ENCODE measurements at regions of chr20 and their contacts with region 1.

Region 1: GRCh38 chr20:38073307-38074071 is 39.9 kb downstream of the RPRD1B start:
- DNase-seq: peak; percentile 75
- H3K4me3 ChIP-seq: no peak overlapping the region
- H3K27ac ChIP-seq: no peak overlapping the region
- H3K4me1 ChIP-seq: no peaks in the 10 kb centered on the region
- H3K27me3 ChIP-seq: no peaks in the 10 kb centered on the region
- CTCF ChIP-seq: peak; percentile 80

Region 2: GRCh38 chr20:37896932-37897548 is 176.4 kb before region 1 on chr20:
- CTCF ChIA-PET with region 1: no interaction called
- POLR2A ChIA-PET with region 1: no interaction called
- intact Hi-C with region 1: no loop called
- DNase-seq: peak; percentile 59
- H3K4me3 ChIP-seq: no peak overlapping the region
- H3K27ac ChIP-seq: peak overlapping the region; percentile 44
- H3K4me1 ChIP-seq: peaks cover 48% of the 10 kb centered on the region
- H3K27me3 ChIP-seq: no peaks in the 10 kb centered on the region
- CTCF ChIP-seq: peak; percentile 49

Region 3: GRCh38 chr20:38043512-38044300 is 29.8 kb before region 1 on chr20:
- CTCF ChIA-PET with region 1: interaction called, 10 read pairs
- POLR2A ChIA-PET with region 1: no interaction called
- intact Hi-C with region 1: no loop called
- DNase-seq: peak; percentile 30
- H3K4me3 ChIP-seq: no peak overlapping the region
- H3K27ac ChIP-seq: no peak overlapping the region
- H3K4me1 ChIP-seq: no peaks in the 10 kb centered on the region
- H3K27me3 ChIP-seq: no peaks in the 10 kb centered on the region
- CTCF ChIP-seq: no peak

Region 4: GRCh38 chr20:38165089-38165989 is 91.8 kb after region 1 on chr20 and contains the start of gene TGM2:
- CTCF ChIA-PET with region 1: no interaction called
- POLR2A ChIA-PET with region 1: no interaction called
- intact Hi-C with region 1: loop called (anchors 5 kb)
- DNase-seq: peak; percentile 62
- H3K4me3 ChIP-seq: peak within 1 kb of the TSS; percentile 35
- H3K27ac ChIP-seq: no peak within 1 kb of the TSS
- H3K4me1 ChIP-seq: no peaks in the 10 kb centered on the region
- H3K27me3 ChIP-seq: no peaks in the 10 kb centered on the region
- CTCF ChIP-seq: peak; percentile 75
- total RNA-seq, gene TGM2: 0.43 and 0.85 TPM in 2 replicates

Region 5: DNA sequence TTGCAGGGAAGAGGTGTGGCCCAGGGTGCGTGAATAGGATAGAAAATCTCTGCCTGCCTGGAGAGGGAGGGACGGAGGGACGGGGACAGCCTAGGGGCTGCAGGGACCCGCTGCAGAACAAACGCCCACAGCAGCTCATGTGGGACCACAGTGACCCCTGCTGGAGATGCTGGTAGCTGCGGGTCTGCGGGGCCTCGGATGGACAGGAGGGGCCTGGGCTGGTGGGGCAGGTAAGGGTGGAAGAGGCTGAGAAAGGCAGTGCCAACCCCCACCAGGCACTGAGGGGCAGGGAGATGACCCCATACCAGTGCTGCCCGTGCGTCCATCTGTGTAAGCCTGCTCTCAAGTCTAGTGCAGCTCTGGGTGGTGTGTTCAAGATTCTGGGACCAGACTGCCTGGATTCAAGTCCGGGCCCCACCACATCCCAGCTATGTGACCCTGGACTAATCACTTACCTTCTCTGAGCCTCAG is 147.7 kb after region 1 on chr20:
- CTCF ChIA-PET with region 1: interaction called, 21 read pairs
- POLR2A ChIA-PET with region 1: no interaction called
- intact Hi-C with region 1: loop called (anchors 5 kb)
- DNase-seq: peak; percentile 77
- H3K4me3 ChIP-seq: no peak overlapping the region
- H3K27ac ChIP-seq: no peak overlapping the region
- H3K4me1 ChIP-seq: no peaks in the 10 kb centered on the region
- H3K27me3 ChIP-seq: no peaks in the 10 kb centered on the region
- CTCF ChIP-seq: peak; percentile 93

Region 6: GRCh38 chr20:38242848-38243449 is 169.5 kb after region 1 on chr20:
- CTCF ChIA-PET with region 1: no interaction called
- POLR2A ChIA-PET with region 1: no interaction called
- intact Hi-C with region 1: no loop called
- DNase-seq: peak; percentile 40
- H3K4me3 ChIP-seq: no peak overlapping the region
- H3K27ac ChIP-seq: no peak overlapping the region
- H3K4me1 ChIP-seq: no peaks in the 10 kb centered on the region
- H3K27me3 ChIP-seq: no peaks in the 10 kb centered on the region
- CTCF ChIP-seq: peak; percentile 54

Region 7: DNA sequence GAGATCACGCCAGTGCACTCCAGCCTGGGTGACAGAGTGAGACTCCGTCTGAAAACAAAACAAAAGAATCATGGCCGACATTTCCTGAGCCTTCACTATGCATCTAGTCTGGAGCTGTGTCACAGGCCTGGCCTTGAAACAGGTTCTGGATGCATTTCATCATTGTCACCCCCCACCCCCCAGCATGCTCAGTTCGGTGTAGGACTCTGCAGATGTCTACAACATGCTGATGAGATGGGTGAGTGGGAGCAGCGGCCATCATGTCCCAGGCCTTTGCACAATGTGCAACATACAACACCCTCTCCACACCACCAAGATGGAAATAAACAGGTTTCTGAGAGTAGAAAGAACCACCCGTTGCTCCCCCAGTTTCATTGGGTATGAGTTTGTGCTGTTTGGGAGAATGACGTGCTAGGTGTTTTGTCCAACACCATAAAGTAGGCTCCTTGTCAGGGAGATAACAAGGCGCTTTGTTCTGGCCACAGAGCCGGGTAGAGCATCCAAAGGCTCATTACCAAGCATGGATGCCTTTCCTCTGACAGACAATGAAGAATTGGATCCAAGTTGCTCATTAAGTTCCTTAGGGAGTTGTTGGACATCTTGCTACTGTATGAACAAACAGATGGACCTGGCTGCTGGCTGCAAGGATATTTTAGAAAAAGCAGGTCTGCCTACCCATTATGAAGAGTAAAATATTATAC is 339.5 kb after region 1 on chr20:
- CTCF ChIA-PET with region 1: interaction called, 8 read pairs
- POLR2A ChIA-PET with region 1: no interaction called
- intact Hi-C with region 1: loop called (anchors 1 kb)
- DNase-seq: no peak
- H3K4me3 ChIP-seq: no peak overlapping the region
- H3K27ac ChIP-seq: no peak overlapping the region
- H3K4me1 ChIP-seq: no peaks in the 10 kb centered on the region
- H3K27me3 ChIP-seq: no peaks in the 10 kb centered on the region
- CTCF ChIP-seq: no peak

Measured in A673 (cell line).